ENCODE measurements at regions of chr15 and their contacts with region 1.

Region 1: DNA sequence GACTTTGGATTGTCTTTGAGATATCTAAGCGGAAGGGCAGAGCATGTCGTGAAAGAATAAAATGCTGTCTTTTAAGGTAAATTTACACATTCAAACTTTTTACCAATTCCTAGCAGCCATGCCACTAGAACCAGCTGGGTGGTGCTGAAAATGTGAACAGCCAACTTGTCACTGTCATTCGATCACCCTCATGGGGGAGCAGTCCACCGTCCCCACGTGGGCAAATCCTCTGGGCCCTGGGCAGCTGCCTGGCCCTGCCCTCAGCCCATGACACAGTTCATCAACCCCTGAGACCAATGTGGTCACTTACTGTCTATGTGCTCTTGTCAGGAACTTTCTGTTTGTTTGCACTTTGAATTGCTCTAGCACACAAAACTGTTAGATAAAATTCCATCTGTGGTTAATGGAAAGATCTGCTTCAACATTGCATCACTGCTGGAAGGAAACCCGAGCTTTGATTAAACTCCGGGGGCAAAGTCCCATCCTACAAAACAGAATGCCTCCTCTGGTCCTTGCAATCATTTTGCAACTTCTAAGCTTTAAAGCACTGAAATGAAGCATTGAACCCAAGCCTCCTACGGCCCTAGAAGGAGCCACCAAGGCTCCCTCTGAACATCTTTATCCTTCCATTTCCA is 50.1 kb downstream of the PCSK6 start:
- DNase-seq: no peak
- ATAC-seq: peak; percentile 50 to 66 (median 59)
- H3K4me3 ChIP-seq: peak overlapping the region in 4 of 12 donors; percentile 3 to 29 (median 16)
- H3K27ac ChIP-seq: peak overlapping the region; percentile 16 to 72 (median 42)
- H3K4me1 ChIP-seq: peaks cover 0 to 37% (median 8%) of the 10 kb centered on the region in 12 donors
- H3K27me3 ChIP-seq: no peaks in the 10 kb centered on the region
- CTCF ChIP-seq: no peak
- POLR2A ChIP-seq: no peak

Region 2: DNA sequence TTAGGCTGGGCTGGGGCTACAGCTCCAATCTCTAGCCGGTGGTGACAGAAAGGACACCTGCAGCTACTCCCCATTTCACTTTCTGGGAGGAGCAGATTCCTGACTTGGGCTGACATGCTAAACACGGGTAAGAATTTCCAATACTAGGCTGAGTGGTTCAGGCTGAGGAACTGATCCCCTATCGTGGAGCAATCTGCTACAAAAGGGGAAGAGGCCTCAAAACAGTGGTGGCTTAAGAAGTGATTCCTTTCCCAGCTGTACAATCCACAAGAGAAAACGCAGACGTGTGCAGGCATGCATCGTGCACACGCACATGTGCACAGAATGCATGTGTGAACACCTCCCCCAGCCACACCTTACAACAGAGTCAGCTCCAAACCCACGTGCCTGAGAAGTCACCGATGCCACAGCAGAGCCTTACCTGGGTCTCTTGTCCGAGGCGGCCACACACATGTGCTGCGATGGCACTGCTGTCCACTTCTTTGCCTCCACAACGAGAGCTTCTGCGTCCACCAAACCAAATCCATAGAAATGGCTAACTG is 57.7 kb before region 1 on chr15:
- intact Hi-C with region 1: loop called in 1 of 10 experiments (anchors 10 kb)
- DNase-seq: no peak
- ATAC-seq: no peak
- H3K4me3 ChIP-seq: no peak overlapping the region
- H3K27ac ChIP-seq: no peak overlapping the region
- H3K4me1 ChIP-seq: no peaks in the 10 kb centered on the region
- H3K27me3 ChIP-seq: no peaks in the 10 kb centered on the region
- CTCF ChIP-seq: no peak
- POLR2A ChIP-seq: no peak

Region 3: GRCh38 chr15:101579631-101580141 is 140.3 kb after region 1 on chr15:
- intact Hi-C with region 1: no loop called
- DNase-seq: no peak
- ATAC-seq: no peak
- H3K4me3 ChIP-seq: no peak overlapping the region
- H3K27ac ChIP-seq: no peak overlapping the region
- H3K4me1 ChIP-seq: peaks cover 0 to 7% (median 0%) of the 10 kb centered on the region in 12 donors
- H3K27me3 ChIP-seq: peaks cover 0 to under 1% (median 0%) of the 10 kb centered on the region in 9 donors
- CTCF ChIP-seq: no peak
- POLR2A ChIP-seq: no peak